Panc1 (cell line): ENCODE measurements at regions of chr22 and their contacts with region 1.

Region 1: DNA sequence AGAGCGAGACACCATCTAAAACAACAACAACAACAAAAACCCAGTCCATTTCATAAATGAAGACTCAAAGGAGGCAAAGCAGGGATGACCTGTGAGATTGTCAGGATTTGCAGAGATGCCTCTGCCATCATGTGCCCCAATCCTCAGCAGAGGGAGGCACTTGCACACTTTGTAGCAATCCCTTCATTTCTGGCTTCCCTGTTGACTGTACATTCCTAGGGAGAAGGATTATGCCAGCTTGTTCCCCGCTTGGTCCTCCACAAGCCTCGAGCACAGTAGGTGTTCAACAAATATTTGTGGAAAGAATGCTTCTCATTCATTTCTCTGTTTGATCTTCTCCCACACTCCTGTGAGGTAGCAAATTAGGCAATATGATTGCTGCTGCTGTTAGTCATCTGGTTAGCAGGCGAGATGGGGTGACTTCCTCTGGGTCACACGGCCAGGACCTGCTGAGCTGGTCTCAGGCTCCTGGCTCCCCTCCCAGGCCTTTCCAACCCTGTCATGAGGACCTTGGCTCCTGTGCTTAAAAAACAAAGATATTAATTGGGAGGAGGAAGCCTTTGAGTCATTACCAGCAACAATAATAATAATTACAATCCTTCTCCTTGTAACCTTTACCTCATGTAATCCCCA is 34.1 kb downstream of the LIF start:
- DNase-seq: peak; percentile 93
- ATAC-seq: peak; percentile 86
- H3K4me3 ChIP-seq: no peak overlapping the region
- H3K27ac ChIP-seq: peak overlapping the region; percentile 98
- H3K4me1 ChIP-seq: peaks cover 63% of the 10 kb centered on the region
- H3K27me3 ChIP-seq: no peaks in the 10 kb centered on the region
- CTCF ChIP-seq: no peak

Region 2: GRCh38 chr22:29642694-29643093 is 569.8 kb before region 1 on chr22:
- CTCF ChIA-PET with region 1: no interaction called
- POLR2A ChIA-PET with region 1: interaction called, 14 read pairs
- in situ Hi-C with region 1: no loop called
- intact Hi-C with region 1: no loop called
- DNase-seq: no peak
- ATAC-seq: no peak
- H3K4me3 ChIP-seq: no peak overlapping the region
- H3K27ac ChIP-seq: no peak overlapping the region
- H3K4me1 ChIP-seq: peaks cover 4% of the 10 kb centered on the region; the same call in 1 of the 2 replicates
- H3K27me3 ChIP-seq: no peaks in the 10 kb centered on the region
- CTCF ChIP-seq: no peak

Region 3: GRCh38 chr22:30104501-30105156 is 107.8 kb before region 1 on chr22:
- CTCF ChIA-PET with region 1: no interaction called
- POLR2A ChIA-PET with region 1: no interaction called
- in situ Hi-C with region 1: no loop called
- intact Hi-C with region 1: loop called (anchors 5 kb)
- DNase-seq: no peak
- ATAC-seq: no peak
- H3K4me3 ChIP-seq: no peak overlapping the region
- H3K27ac ChIP-seq: no peak overlapping the region
- H3K4me1 ChIP-seq: 0 out of 2 replicates have a peak, but pooled peaks cover 5% of the 10 kb centered on the region
- H3K27me3 ChIP-seq: no peaks in the 10 kb centered on the region
- CTCF ChIP-seq: no peak